ENCODE measurements at regions of chr11 and their contacts with region 1.

Region 1: DNA sequence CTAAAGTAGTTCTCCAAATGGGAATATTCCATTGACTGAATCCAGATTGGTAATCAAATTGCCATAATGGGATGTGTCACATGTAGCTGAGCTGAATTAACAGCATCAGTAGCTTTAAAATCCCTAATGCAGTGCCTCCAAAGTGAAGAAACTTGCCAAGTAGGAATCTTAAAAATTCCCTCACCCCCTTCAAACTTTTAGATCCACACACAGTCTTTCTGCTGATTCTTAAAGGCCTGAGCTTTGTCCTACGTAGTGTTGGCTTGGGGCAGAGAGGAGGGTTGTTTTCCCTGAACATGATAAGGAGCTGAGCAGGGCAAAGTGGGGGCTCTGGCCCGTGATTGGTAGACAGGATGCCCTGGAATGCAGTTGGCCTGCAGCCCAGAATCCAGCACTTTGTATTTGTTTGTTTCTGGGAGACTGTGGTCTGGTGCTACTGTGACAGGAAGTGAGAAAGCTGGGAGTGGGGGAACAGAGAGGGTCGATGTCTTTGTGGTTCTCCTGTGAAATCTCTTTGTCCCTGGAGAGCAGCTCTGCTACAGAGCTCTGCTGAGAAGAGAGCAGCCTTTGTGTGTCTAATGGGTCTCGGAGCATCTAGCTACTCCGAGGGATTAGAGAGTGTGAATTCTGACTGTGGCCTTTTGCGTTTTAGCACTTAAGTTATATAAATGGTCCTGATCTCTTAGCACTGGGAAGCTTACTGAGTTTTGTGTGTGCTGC is 16.9 kb downstream of the CTNND1 start:
- DNase-seq: no peak
- ATAC-seq: no peak
- H3K4me3 Mint-ChIP-seq: no peak overlapping the region
- H3K27ac Mint-ChIP-seq: peak overlapping the region; percentile 4
- H3K4me1 Mint-ChIP-seq: peaks cover 51% of the 10 kb centered on the region
- H3K27me3 Mint-ChIP-seq: no peaks in the 10 kb centered on the region
- CTCF ChIP-seq: no peak

Region 2: GRCh38 chr11:57761301-57762234 is 16.9 kb before region 1 on chr11 and contains the start of gene CTNND1:
- CTCF ChIA-PET with region 1: interaction called, 4 read pairs
- POLR2A ChIA-PET with region 1: interaction called, 15 read pairs
- intact Hi-C with region 1: loop called (anchors 1 kb)
- DNase-seq: no peak
- ATAC-seq: peak; percentile 82
- H3K4me3 Mint-ChIP-seq: peak within 1 kb of the TSS; percentile 93
- H3K27ac Mint-ChIP-seq: peak within 1 kb of the TSS; percentile 77
- H3K4me1 Mint-ChIP-seq: peaks cover 30% of the 10 kb centered on the region
- H3K27me3 Mint-ChIP-seq: no peaks in the 10 kb centered on the region
- CTCF ChIP-seq: no peak
- total RNA-seq, gene CTNND1: 34.2 and 42.3 TPM in 2 replicates

Region 3: GRCh38 chr11:57881647-57882046 is 103.2 kb after region 1 on chr11:
- CTCF ChIA-PET with region 1: no interaction called
- POLR2A ChIA-PET with region 1: no interaction called
- intact Hi-C with region 1: no loop called
- DNase-seq: no peak
- ATAC-seq: no peak
- H3K4me3 Mint-ChIP-seq: no peak overlapping the region
- H3K27ac Mint-ChIP-seq: no peak overlapping the region
- H3K4me1 Mint-ChIP-seq: no peaks in the 10 kb centered on the region
- H3K27me3 Mint-ChIP-seq: peaks cover 5% of the 10 kb centered on the region
- CTCF ChIP-seq: no peak